Activated B cell treated with CpG ODN at 0.5 μM for 24 hours (primary cell): ENCODE measurements at regions of chr20 and their contacts with region 1.

Region 1: GRCh38 chr20:58650776-58651558 is at the start of gene STX16:
- DNase-seq: peak; percentile 79
- ATAC-seq: peak; percentile 82
- H3K4me3 Mint-ChIP-seq: peak within 1 kb of the TSS; percentile 97
- H3K27ac Mint-ChIP-seq: peak within 1 kb of the TSS; percentile 93
- H3K4me1 Mint-ChIP-seq: peaks cover 20% of the 10 kb centered on the region
- H3K27me3 Mint-ChIP-seq: no peaks in the 10 kb centered on the region
- CTCF ChIP-seq: no peak
- total RNA-seq, gene STX16: 71.4 and 77.4 TPM in 2 replicates

Region 2: DNA sequence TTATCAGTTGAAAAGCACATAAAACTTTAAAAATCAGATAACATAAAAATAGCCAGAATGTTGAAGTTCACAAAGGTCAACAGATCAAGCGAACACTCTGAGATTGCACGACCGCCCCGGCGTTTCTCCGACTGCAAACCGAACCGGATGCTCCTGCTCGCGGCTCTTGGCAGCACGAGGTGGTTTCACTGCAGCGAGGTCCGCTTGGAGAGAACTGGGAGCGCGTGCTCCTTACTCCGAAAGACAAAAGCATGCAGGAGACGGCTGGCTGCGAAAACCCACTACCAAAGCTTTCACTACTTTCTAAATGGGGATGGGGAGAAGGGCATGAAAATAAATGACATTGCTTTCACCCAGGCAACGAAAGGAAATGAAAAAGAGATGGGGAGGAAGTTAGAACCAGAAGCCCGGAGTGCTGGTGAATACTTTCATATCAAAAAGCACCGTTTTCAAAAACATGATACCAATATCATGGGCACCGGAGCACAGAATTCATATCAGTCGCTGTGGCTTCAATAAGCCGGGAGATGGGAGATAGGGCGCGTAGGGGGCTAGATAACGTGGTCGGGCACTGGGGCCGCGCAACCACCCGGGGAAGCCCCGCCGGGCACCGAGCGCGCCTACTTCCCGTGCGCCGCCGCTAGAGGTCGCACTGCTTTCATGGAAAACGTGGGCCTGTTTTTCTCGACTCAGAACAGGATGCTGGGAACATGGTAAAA is 414.2 kb before region 1 on chr20:
- CTCF ChIA-PET with region 1: interaction called, 3 read pairs
- POLR2A ChIA-PET with region 1: no interaction called
- intact Hi-C with region 1: loop called (anchors 1 kb)
- DNase-seq: peak; percentile 75
- ATAC-seq: peak; percentile 92
- H3K4me3 Mint-ChIP-seq: peak overlapping the region; percentile 93
- H3K27ac Mint-ChIP-seq: peak overlapping the region; percentile 87
- H3K4me1 Mint-ChIP-seq: peaks cover 7% of the 10 kb centered on the region
- H3K27me3 Mint-ChIP-seq: no peaks in the 10 kb centered on the region
- CTCF ChIP-seq: no peak

Region 3: GRCh38 chr20:58458180-58459057 is 192.5 kb before region 1 on chr20:
- CTCF ChIA-PET with region 1: interaction called, 5 read pairs
- POLR2A ChIA-PET with region 1: interaction called, 16 read pairs
- intact Hi-C with region 1: loop called (anchors 2 kb)
- DNase-seq: peak; percentile 58
- ATAC-seq: peak; percentile 99
- H3K4me3 Mint-ChIP-seq: peak overlapping the region; percentile 53
- H3K27ac Mint-ChIP-seq: peak overlapping the region; percentile 74
- H3K4me1 Mint-ChIP-seq: peaks cover 30% of the 10 kb centered on the region
- H3K27me3 Mint-ChIP-seq: no peaks in the 10 kb centered on the region
- CTCF ChIP-seq: no peak

Region 4: GRCh38 chr20:58775371-58775770 is 124.4 kb after region 1 on chr20:
- CTCF ChIA-PET with region 1: no interaction called
- POLR2A ChIA-PET with region 1: no interaction called
- intact Hi-C with region 1: no loop called
- DNase-seq: no peak
- ATAC-seq: no peak
- H3K4me3 Mint-ChIP-seq: no peak overlapping the region
- H3K27ac Mint-ChIP-seq: no peak overlapping the region
- H3K4me1 Mint-ChIP-seq: no peaks in the 10 kb centered on the region
- H3K27me3 Mint-ChIP-seq: peaks cover 13% of the 10 kb centered on the region
- CTCF ChIP-seq: no peak

Region 5: DNA sequence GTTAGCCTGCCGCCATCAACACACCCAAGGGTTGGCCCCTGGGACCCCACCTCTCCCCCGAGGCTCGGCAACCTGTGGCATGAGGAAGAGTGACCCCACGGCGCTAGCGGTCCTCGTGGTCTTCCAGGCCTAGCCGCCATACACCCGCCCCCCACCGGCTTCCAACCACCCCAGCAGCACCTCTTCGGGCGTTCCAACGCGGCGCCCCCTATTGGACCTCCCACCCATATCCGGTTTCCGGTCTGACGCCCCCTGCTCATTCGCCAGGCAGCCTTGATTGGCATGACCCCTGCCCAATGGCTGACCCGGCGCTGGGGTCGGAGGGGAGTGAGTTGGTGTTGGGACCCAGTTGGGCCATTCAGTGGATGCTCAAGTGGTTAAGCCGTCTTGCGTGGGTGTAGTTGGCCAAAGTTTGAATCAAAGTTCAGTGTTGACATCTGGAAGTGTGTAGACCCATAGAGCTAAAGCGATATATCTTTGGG is 199.8 kb after region 1 on chr20 and contains the start of gene GNAS-AS1:
- CTCF ChIA-PET with region 1: no interaction called
- POLR2A ChIA-PET with region 1: no interaction called
- intact Hi-C with region 1: loop called (anchors 5 kb)
- DNase-seq: peak; percentile 69
- ATAC-seq: peak; percentile 93
- H3K4me3 Mint-ChIP-seq: peak within 1 kb of the TSS; percentile 89
- H3K27ac Mint-ChIP-seq: no peak within 1 kb of the TSS
- H3K4me1 Mint-ChIP-seq: peaks cover 33% of the 10 kb centered on the region
- H3K27me3 Mint-ChIP-seq: peaks cover 17% of the 10 kb centered on the region
- CTCF ChIP-seq: no peak
- total RNA-seq, gene GNAS-AS1: 1.4 and 1.5 TPM in 2 replicates

Region 6: GRCh38 chr20:59120491-59120890 is 469.5 kb after region 1 on chr20:
- CTCF ChIA-PET with region 1: no interaction called
- POLR2A ChIA-PET with region 1: interaction called, 17 read pairs
- intact Hi-C with region 1: loop called (anchors 1 kb)
- DNase-seq: no peak
- ATAC-seq: no peak
- H3K4me3 Mint-ChIP-seq: peak overlapping the region; percentile 54
- H3K27ac Mint-ChIP-seq: peak overlapping the region; percentile 99
- H3K4me1 Mint-ChIP-seq: peaks cover 68% of the 10 kb centered on the region
- H3K27me3 Mint-ChIP-seq: no peaks in the 10 kb centered on the region
- CTCF ChIP-seq: no peak